ENCODE measurements at regions of chr10 and their contacts with region 1.

Region 1: DNA sequence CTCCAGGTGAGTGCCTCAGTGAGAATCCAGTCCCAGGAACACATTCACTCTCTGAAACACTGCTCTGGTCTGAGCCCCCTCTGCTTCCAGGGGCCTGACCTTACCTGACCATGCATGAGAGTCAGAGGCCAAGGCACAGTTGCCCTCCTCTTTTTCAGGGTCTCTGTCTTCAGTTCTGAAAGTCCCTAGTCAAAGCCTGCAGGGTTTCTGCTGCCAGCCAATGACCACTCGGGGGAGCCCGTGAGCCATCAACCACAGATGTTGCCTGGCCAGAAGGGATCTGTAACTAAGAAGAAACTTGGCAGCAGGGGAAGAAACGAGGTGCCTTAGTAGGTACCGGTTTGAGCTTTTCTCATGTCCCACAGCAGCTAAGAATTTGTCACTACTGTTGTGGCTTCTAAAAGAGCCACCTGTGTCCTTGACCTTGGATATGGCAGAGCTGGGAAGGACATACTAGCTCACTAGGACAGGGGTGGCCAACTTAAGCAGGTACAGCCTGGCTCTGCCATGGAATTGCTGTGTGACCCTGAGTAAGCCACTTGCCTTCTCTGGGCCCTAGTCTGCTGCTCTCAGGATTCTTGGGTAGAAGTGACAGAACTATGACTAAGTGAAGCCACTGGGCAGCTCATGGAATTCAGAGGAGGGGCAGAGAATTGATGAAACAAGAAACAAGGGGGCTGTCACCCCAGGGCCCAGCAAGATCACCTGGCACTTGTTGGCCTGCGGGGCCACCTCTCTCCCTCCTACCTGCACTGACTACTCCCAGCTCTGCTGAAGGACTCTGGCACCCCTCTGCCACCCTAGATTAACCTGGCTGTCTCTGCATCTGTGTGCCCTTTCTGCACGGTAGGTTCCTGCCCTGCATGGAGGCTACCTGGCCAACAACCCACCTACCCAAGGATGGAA is 83.8 kb upstream of the GPR26 start:
- DNase-seq: peak; percentile 84
- ATAC-seq: peak; percentile 58
- H3K4me3 Mint-ChIP-seq: no peak overlapping the region
- H3K27ac Mint-ChIP-seq: no peak overlapping the region
- H3K4me1 Mint-ChIP-seq: no peaks in the 10 kb centered on the region
- H3K27me3 Mint-ChIP-seq: peaks cover 38% of the 10 kb centered on the region

Region 2: DNA sequence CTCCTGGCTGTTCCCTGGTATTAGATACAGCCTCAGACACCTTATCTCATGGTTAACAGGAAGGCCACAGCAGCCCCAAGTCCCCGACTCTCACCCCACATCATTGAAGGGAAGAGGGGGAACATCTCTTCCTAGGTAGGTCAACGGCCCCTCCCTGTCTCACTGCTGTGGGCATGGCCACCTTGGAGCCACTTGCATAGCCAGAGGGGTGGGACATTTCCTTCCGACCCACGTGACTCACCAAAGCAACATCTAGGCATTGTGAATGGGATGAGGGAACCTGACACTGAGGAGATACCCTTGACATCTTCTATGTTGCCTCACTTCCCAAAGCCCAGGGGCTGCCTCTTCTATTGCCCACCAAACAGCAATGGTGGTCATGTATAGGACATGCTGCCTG is 15.3 kb after region 1 on chr10:
- CTCF ChIA-PET with region 1: no interaction called
- POLR2A ChIA-PET with region 1: no interaction called
- intact Hi-C with region 1: no loop called
- DNase-seq: no peak
- ATAC-seq: no peak
- H3K4me3 Mint-ChIP-seq: no peak overlapping the region
- H3K27ac Mint-ChIP-seq: no peak overlapping the region
- H3K4me1 Mint-ChIP-seq: no peaks in the 10 kb centered on the region
- H3K27me3 Mint-ChIP-seq: peaks cover 10% of the 10 kb centered on the region

Region 3: GRCh38 chr10:123642293-123642692 is 60.0 kb after region 1 on chr10:
- CTCF ChIA-PET with region 1: no interaction called
- POLR2A ChIA-PET with region 1: no interaction called
- intact Hi-C with region 1: no loop called
- DNase-seq: no peak
- ATAC-seq: no peak
- H3K4me3 Mint-ChIP-seq: no peak overlapping the region
- H3K27ac Mint-ChIP-seq: no peak overlapping the region
- H3K4me1 Mint-ChIP-seq: no peaks in the 10 kb centered on the region
- H3K27me3 Mint-ChIP-seq: peaks cover 24% of the 10 kb centered on the region

Region 4: DNA sequence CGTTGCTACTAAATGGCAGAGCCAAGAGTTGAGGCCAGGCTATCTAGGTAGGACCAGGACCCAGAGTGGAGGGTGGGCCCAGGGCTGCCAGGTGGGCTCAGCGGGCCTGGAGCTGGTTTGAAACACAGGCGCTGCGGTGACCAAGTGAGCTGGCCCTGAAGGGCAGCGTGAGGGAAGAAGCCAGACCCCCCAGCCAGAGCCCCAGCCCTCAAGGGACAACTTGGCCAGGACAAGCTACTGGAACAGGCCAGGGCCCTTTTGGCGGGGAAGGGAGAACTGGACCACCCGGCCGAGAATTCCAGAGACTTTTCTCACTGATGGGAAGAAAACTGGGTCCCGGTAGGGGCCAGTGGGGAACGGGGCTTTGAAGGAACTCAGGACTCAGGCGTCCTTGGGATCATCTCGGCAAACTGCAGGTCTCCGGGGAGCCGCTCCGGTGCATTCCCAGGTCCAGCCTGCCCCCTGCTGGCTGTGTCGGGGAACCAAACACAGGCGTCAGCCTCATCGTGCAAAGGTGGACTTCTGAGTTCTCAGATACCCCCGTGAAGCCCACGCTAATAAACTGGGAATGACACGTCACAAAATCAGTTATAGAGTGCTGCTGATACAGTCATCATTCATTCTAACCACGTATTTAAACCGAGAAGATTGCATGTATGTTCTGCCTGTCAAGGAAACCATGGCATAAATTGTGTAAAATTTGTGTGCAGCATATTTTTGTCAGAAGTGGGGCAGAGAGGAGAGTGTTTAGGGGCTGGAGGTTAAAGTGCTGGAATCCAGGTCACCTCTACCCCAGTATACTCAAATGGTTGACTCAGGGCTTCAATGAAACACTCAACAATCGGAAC is 385.3 kb after region 1 on chr10:
- CTCF ChIA-PET with region 1: interaction called, 15 read pairs
- POLR2A ChIA-PET with region 1: no interaction called
- intact Hi-C with region 1: loop called (anchors 1 kb)
- DNase-seq: peak; percentile 81
- ATAC-seq: peak; percentile 65
- H3K4me3 Mint-ChIP-seq: no peak overlapping the region
- H3K27ac Mint-ChIP-seq: no peak overlapping the region
- H3K4me1 Mint-ChIP-seq: peaks cover 3% of the 10 kb centered on the region
- H3K27me3 Mint-ChIP-seq: peaks cover 57% of the 10 kb centered on the region

Region 5: GRCh38 chr10:124403548-124403947 is 821.2 kb after region 1 on chr10:
- CTCF ChIA-PET with region 1: interaction called, 4 read pairs
- POLR2A ChIA-PET with region 1: no interaction called
- intact Hi-C with region 1: loop called in 1 of 2 experiments (anchors 5 kb)
- DNase-seq: peak; percentile 27
- ATAC-seq: peak; percentile 100
- H3K4me3 Mint-ChIP-seq: no peak overlapping the region
- H3K27ac Mint-ChIP-seq: peak overlapping the region; percentile 16
- H3K4me1 Mint-ChIP-seq: peaks cover 8% of the 10 kb centered on the region
- H3K27me3 Mint-ChIP-seq: no peaks in the 10 kb centered on the region

Region 6: DNA sequence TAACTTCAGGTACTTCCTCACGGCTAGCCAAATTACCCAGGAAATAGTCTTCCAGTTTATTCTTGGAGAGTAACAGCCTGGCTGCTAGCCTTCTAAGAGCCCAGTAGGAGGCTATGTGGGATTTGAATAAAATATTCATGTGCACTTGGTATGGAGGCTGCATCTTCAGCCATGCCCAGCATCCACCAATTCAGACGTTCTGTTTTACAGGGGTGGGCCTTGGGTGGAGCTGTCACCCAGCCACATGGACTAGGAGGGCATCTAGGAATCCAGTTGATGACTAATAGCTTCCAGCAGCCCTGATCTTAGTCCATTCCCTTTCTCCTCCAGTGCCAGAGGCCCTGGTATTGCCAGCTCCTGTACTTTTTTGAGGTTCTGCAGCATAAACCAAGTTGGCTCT is 1293.3 kb after region 1 on chr10:
- CTCF ChIA-PET with region 1: no interaction called
- POLR2A ChIA-PET with region 1: no interaction called
- intact Hi-C with region 1: no loop called
- DNase-seq: no peak
- ATAC-seq: no peak
- H3K4me3 Mint-ChIP-seq: no peak overlapping the region
- H3K27ac Mint-ChIP-seq: no peak overlapping the region
- H3K4me1 Mint-ChIP-seq: no peaks in the 10 kb centered on the region
- H3K27me3 Mint-ChIP-seq: peaks cover 5% of the 10 kb centered on the region

Measured in activated CD4-positive, alpha-beta T cell treated with anti-CD3 and anti-CD28 coated beads for 36 hours (primary cell).